Activated B cell treated with CpG ODN at 0.5 μM for 24 hours (primary cell): ENCODE measurements at regions of chr7 and their contacts with region 1.

Region 1: GRCh38 chr7:7157177-7157886 is 25.0 kb upstream of the C1GALT1 start:
- DNase-seq: no peak
- ATAC-seq: peak; percentile 86
- H3K4me3 Mint-ChIP-seq: peak overlapping the region; percentile 88
- H3K27ac Mint-ChIP-seq: peak overlapping the region; percentile 95
- H3K4me1 Mint-ChIP-seq: peaks cover 56% of the 10 kb centered on the region
- H3K27me3 Mint-ChIP-seq: no peaks in the 10 kb centered on the region
- CTCF ChIP-seq: no peak

Region 2: GRCh38 chr7:6435486-6436384 is 721.6 kb before region 1 on chr7:
- CTCF ChIA-PET with region 1: no interaction called
- POLR2A ChIA-PET with region 1: no interaction called
- intact Hi-C with region 1: no loop called
- DNase-seq: peak; percentile 83
- ATAC-seq: peak; percentile 92
- H3K4me3 Mint-ChIP-seq: peak overlapping the region; percentile 76
- H3K27ac Mint-ChIP-seq: peak overlapping the region; percentile 76
- H3K4me1 Mint-ChIP-seq: peaks cover 43% of the 10 kb centered on the region
- H3K27me3 Mint-ChIP-seq: no peaks in the 10 kb centered on the region
- CTCF ChIP-seq: peak; percentile 65

Region 3: GRCh38 chr7:7136423-7136822 is 20.9 kb before region 1 on chr7:
- CTCF ChIA-PET with region 1: no interaction called
- POLR2A ChIA-PET with region 1: no interaction called
- intact Hi-C with region 1: loop called (anchors 2 kb)
- DNase-seq: no peak
- ATAC-seq: peak; percentile 21
- H3K4me3 Mint-ChIP-seq: no peak overlapping the region
- H3K27ac Mint-ChIP-seq: peak overlapping the region; percentile 38
- H3K4me1 Mint-ChIP-seq: peaks cover 14% of the 10 kb centered on the region
- H3K27me3 Mint-ChIP-seq: no peaks in the 10 kb centered on the region
- CTCF ChIP-seq: no peak

Region 4: GRCh38 chr7:7176421-7177043 is 19.2 kb after region 1 on chr7:
- CTCF ChIA-PET with region 1: interaction called, 11 read pairs
- POLR2A ChIA-PET with region 1: interaction called, 40 read pairs
- intact Hi-C with region 1: no loop called
- DNase-seq: no peak
- ATAC-seq: peak; percentile 61
- H3K4me3 Mint-ChIP-seq: peak overlapping the region; percentile 3
- H3K27ac Mint-ChIP-seq: peak overlapping the region; percentile 62
- H3K4me1 Mint-ChIP-seq: peaks cover 38% of the 10 kb centered on the region
- H3K27me3 Mint-ChIP-seq: no peaks in the 10 kb centered on the region
- CTCF ChIP-seq: no peak

Region 5: GRCh38 chr7:7251742-7252141 is 94.4 kb after region 1 on chr7:
- CTCF ChIA-PET with region 1: no interaction called
- POLR2A ChIA-PET with region 1: interaction called, 6 read pairs
- intact Hi-C with region 1: loop called (anchors 2 kb)
- DNase-seq: no peak
- ATAC-seq: peak; percentile 96
- H3K4me3 Mint-ChIP-seq: peak overlapping the region; percentile 49
- H3K27ac Mint-ChIP-seq: peak overlapping the region; percentile 96
- H3K4me1 Mint-ChIP-seq: peaks cover 85% of the 10 kb centered on the region
- H3K27me3 Mint-ChIP-seq: no peaks in the 10 kb centered on the region
- CTCF ChIP-seq: no peak

Region 6: DNA sequence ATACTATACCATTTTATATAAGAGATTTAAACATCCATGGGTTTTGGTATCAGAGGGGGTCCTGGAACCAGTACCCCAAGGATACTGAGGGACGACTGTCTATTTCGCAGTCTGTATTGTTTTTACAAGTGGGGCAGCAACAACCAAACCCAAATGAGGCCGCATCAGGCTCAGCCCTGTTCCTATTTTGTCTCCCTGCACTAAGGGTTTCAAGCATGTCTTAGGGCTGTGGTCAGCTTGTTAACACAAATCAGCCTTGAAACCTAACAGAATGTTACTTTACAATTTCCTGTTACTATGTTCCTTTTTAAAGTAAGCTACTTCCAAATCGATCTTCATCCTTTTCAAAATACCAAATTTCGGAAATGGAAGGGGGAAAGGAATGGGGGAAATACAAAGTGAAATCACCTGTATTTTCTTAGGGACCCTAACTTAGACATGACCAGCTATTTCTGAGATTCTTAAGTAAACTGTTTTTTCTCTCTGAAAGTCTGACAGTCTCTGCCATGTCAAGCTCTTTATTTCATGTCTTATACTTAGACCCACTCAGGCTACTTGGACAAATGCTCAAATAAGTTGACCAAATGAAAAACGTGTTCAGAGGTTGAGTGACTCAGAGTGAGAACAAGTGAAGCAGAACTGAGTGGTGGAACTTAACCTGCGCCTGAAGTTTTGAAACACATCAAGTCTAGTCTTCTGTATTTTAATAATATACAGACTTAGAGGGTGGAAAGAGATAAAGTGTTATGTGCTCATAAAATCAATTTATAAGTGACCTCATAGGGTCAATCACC is 100.8 kb after region 1 on chr7:
- CTCF ChIA-PET with region 1: no interaction called
- POLR2A ChIA-PET with region 1: interaction called, 6 read pairs
- intact Hi-C with region 1: loop called (anchors 1 kb)
- DNase-seq: no peak
- ATAC-seq: peak; percentile 77
- H3K4me3 Mint-ChIP-seq: peak overlapping the region; percentile 78
- H3K27ac Mint-ChIP-seq: peak overlapping the region; percentile 89
- H3K4me1 Mint-ChIP-seq: peaks cover 66% of the 10 kb centered on the region
- H3K27me3 Mint-ChIP-seq: no peaks in the 10 kb centered on the region
- CTCF ChIP-seq: no peak